Activated naive CD8-positive, alpha-beta T cell treated with anti-CD3 and anti-CD28 coated beads, Interleukin-2, amount 10 ng/mL, durations not matched to agents 7 days and 5 days (primary cell): ENCODE measurements at regions of chr4 and their contacts with region 1.

Region 1: GRCh38 chr4:55395529-55396307 is at the start of gene TMEM165:
- DNase-seq: peak; percentile 94
- ATAC-seq: peak; percentile 97
- H3K4me3 Mint-ChIP-seq: peak within 1 kb of the TSS; percentile 96
- H3K27ac Mint-ChIP-seq: peak within 1 kb of the TSS; percentile 98
- H3K4me1 Mint-ChIP-seq: peaks cover 38% of the 10 kb centered on the region
- H3K27me3 Mint-ChIP-seq: no peaks in the 10 kb centered on the region
- total RNA-seq, gene TMEM165: 68.4 to 72.6 TPM

Region 2: DNA sequence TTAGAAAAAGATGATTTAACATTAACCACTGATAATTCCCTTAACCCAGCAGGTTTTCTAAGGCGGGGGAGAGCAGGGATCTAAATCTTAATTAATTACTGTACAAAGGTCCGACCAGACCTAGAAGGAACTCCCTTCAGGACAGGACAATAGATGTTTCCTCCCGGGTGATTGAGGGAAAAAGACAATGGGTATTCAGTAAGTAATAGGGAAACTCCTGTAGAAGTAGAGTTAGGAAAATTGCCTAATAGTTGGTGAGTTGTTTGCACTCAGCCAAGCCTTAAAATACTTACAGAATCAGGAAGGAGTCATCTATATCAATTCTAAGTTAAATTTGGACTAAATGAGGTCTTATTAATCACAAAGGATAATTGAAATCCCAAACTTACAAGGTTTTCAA is 55.5 kb before region 1 on chr4:
- POLR2A ChIA-PET with region 1: no interaction called
- DNase-seq: no peak
- ATAC-seq: no peak
- H3K4me3 Mint-ChIP-seq: no peak overlapping the region
- H3K27ac Mint-ChIP-seq: no peak overlapping the region
- H3K4me1 Mint-ChIP-seq: peaks cover 8% of the 10 kb centered on the region
- H3K27me3 Mint-ChIP-seq: no peaks in the 10 kb centered on the region

Region 3: DNA sequence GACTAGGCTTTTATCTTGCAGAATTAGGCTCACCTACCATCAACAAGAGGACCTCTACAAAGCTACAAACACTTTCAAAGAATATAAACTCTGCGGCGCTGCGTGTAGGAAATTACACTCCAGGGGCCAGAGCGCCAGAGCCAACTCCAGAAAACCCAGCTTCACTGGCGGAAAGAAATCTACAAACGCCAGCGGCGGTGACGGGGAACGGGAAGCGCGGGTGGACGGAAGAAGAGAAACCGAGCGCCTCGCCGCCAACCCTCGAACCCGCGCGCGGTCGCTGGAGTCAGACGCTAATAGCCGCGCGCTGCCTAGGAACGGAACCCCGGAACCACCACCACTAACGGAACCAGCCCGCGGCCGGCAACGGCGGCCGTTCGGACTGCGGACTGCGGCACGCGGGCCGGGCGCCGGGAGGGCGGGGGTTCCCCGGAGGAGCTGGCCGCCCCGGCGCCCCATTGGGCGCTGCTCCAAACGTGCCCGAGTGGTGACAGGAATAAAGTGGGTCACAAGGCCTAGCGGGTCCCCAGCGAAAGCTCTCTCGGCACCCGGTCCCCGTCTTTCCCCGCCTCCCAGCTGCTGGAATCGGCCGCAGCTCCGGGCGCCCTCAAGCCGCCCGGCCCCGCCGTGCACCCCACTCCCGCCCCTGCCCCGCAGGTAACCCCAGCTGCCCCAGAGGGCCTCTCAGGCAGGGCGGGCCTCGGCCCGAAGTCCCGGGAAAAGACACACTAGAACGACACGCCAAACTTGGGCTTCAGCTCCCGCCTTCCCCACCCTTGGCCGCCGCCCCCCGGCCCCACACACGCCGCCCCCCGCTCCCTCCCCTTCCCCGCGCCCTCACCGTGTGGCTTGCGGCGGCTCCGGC is 150.2 kb after region 1 on chr4:
- POLR2A ChIA-PET with region 1: interaction called, 10 read pairs
- DNase-seq: peak; percentile 75
- ATAC-seq: peak; percentile 53
- H3K4me3 Mint-ChIP-seq: peak overlapping the region; percentile 90
- H3K27ac Mint-ChIP-seq: peak overlapping the region; percentile 79
- H3K4me1 Mint-ChIP-seq: peaks cover 33% of the 10 kb centered on the region
- H3K27me3 Mint-ChIP-seq: peaks cover 4% of the 10 kb centered on the region